ENCODE measurements at regions of chr5 and their contacts with region 1.

Region 1: DNA sequence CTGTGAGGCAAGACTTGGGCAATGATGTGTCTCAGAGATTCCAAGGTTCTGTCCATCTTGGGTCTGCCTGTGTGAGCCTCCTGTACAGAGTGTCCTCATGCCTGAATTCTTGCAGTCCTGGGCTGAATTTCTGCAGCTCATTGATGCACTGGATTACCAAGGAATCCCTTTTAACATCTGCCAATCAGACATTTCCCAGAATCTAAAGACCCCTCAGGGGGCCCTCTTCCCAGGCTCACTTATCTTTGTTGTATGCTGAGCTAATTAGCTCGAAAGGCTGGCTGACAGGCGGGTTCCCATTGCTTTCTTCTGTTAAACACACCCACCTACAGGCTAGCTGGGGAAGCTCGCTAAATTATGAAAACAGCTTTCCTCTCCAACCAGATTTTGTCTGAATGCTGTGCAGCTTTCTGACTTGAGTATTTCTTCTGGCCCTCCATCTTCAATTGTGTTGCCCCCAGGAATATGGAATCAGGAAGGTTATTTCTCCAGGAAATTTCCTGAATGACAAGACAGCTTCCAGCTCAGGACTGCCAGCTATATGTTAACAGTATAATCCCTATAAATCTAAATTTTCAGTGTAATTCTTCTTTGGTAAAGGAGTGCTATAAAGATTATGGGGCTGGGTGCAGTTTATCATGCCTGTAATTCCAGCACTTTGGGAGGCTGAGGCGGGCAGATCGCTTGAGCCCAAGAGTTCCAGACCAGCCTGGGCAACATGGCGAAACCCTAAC is at the start of gene LIX1:
- DNase-seq: peak in 2 of 5 donors; percentile 21 to 29
- ATAC-seq: peak; percentile 72 to 84 (median 76)
- H3K4me3 ChIP-seq: no peak within 1 kb of the TSS
- H3K27ac ChIP-seq: no peak within 1 kb of the TSS
- H3K4me1 ChIP-seq: no peaks in the 10 kb centered on the region
- H3K27me3 ChIP-seq: no peaks in the 10 kb centered on the region
- CTCF ChIP-seq: peak; percentile 30 to 69 (median 58)
- POLR2A ChIP-seq: no peak
- total RNA-seq, gene LIX1: 0.12 to 0.33 (median 0.22) TPM in 3 of 9 donors, not detected in the others

Region 2: DNA sequence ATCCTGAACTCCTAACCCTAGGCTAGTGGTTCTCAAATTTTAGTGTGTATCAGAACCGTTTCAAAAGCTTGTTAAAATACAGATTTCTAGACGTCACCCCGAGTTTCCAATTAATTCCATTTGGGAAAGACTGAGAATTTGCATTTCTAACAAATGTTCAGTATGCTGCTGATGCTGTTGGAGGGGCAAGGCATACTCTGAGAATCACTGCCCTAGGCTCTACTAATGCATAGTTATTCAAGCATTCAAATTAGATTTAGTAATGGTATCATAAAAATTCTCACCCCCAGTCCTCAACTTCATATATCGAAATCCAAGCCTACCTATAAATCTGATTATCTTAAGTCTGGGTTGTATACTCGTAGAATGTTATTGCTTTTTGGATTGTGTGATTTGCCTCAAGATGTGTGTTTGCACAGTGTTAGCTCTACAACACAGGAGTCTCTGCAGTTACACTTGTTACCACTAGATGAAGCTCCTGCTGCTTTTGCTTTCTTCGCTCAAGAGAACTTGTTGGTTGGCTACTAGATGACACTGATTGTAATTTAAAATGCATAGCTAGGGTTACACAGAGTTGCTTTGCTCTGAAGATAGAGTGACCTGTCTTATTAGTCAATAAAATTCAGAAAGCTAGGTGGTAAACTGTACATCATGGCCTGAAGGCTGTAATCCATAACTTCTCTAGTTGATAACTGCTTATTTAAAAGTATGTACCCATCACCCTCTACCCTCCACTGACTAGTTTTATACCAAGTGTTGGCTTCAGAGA is 273.9 kb before region 1 on chr5:
- intact Hi-C with region 1: loop called in 4 of 10 experiments (anchors 5 kb)
- DNase-seq: no peak
- ATAC-seq: peak; percentile 58 to 90 (median 82)
- H3K4me3 ChIP-seq: no peak overlapping the region
- H3K27ac ChIP-seq: no peak overlapping the region
- H3K4me1 ChIP-seq: no peaks in the 10 kb centered on the region
- H3K27me3 ChIP-seq: no peaks in the 10 kb centered on the region
- CTCF ChIP-seq: peak; percentile 82 to 94 (median 90)
- POLR2A ChIP-seq: no peak

Region 3: GRCh38 chr5:96997265-96997859 is 145.3 kb before region 1 on chr5:
- intact Hi-C with region 1: loop called in 3 of 10 experiments (anchors 5 kb)
- DNase-seq: no peak
- ATAC-seq: peak in 1 of 4 donors; percentile 61
- H3K4me3 ChIP-seq: no peak overlapping the region
- H3K27ac ChIP-seq: no peak overlapping the region
- H3K4me1 ChIP-seq: no peaks in the 10 kb centered on the region
- H3K27me3 ChIP-seq: no peaks in the 10 kb centered on the region
- CTCF ChIP-seq: peak in 11 of 12 donors; percentile 27 to 66 (median 49)
- POLR2A ChIP-seq: no peak

Region 4: DNA sequence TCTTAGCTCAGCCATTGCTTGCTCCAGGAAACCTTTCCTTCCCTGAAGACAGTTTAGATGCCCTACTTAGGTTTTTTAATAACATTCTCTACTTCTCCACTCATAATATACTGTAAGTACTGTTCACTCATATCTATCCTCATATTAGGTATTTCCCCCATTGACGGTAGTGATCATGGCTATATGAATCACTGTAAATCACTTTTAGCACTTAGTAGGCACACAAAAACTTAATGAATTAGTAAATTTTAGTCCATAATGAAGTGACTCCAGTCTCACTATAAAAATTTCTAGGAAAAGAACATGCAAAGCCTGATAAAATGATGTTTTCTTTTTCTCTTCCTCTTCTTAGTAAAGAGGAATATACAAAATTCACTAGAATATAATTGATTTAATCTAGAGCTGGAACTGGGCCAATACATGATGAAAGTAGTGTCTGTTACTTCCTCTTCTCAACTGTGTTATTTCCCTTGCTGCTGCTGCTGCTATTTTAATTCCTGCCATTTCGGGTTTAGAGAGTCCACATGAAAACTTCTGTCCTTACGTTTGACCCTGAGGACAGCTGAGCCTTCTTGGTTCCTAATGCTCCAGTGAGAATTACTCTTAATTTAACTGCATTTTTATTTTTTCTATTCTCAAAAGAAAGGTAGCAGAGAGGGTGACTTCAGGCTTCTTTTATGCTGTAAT is 133.3 kb before region 1 on chr5:
- intact Hi-C with region 1: loop called in 1 of 10 experiments (anchors 5 kb)
- DNase-seq: peak in 1 of 5 donors; percentile 13
- ATAC-seq: peak in 3 of 4 donors; percentile 57 to 60 (median 59)
- H3K4me3 ChIP-seq: no peak overlapping the region
- H3K27ac ChIP-seq: peak overlapping the region in 2 of 12 donors; percentile 25 to 63
- H3K4me1 ChIP-seq: peaks cover 0 to 19% (median 10%) of the 10 kb centered on the region in 12 donors
- H3K27me3 ChIP-seq: no peaks in the 10 kb centered on the region
- CTCF ChIP-seq: no peak
- POLR2A ChIP-seq: no peak

Region 5: DNA sequence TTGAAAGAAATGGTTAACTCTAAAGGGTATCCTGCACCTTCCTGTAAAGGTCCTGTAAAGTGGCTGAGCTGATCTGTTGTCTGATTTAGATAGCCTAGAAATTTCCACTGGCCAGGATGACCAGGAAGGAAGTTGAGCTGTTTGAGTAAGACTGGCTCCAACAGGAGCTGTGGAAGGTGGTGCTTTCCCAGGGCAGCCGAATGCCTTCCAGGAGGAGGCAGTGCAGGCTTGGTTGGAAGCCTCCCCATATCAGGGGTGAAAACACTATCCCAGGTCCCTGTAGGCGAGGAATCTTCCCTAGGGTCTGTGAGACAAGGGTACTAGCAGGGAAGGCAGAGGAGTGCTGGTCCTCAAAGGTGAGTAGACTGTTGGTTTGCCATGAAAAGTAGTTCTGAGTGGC is 98.6 kb before region 1 on chr5:
- intact Hi-C with region 1: loop called (anchors 1 to 10 kb)
- DNase-seq: peak in 4 of 5 donors; percentile 15 to 42 (median 26)
- ATAC-seq: peak; percentile 66 to 88 (median 84)
- H3K4me3 ChIP-seq: no peak overlapping the region
- H3K27ac ChIP-seq: no peak overlapping the region
- H3K4me1 ChIP-seq: peaks cover 0 to 6% (median 0%) of the 10 kb centered on the region in 12 donors
- H3K27me3 ChIP-seq: no peaks in the 10 kb centered on the region
- CTCF ChIP-seq: peak; percentile 28 to 62 (median 48)
- POLR2A ChIP-seq: no peak

Region 6: DNA sequence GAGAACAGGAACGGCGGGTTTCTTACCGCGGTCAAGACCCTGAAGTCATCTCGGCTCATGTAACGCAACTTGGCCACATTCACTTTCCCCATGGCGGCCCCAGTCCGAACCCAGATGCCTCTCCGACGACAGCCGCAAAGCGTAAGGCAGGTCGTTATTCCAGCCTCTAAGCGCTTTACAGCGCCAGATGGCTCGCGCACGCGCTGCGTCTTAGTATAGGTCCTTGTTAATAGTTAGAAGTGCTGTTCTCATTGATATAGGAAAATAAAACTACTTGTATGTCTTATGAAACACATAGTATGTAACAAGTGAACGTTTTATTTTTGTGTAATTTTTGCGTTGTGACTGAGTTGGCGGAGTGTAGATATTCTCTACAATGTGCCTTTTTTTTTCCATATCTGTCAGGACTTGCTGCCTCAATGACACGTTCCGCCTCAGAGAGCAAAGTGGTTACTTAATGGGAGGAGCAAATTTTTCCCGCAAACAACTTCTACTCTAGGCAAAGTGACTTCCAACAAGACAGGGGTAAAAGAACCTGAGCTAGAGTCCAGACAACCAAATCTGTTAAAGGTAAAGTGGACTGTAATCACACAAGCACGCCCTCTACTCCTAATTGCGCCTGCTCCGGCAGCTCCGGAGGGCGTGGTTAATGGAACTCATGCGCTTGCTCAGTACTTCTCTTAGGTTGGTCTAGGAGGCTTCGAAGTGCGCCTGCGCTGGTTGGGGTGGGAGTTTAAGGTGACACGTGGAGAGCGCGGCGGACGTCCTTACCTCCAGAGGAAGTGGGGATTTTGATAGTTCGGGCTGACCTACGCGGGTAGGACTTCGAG is 40.6 kb after region 1 on chr5 and contains the start of gene RIOK2:
- intact Hi-C with region 1: no loop called
- DNase-seq: peak; percentile 93 to 96 (median 96)
- ATAC-seq: peak; percentile 96 to 98 (median 97)
- H3K4me3 ChIP-seq: peak within 1 kb of the TSS; percentile 48 to 97 (median 78)
- H3K27ac ChIP-seq: peak within 1 kb of the TSS; percentile 88 to 94 (median 91)
- H3K4me1 ChIP-seq: peaks cover 0 to 32% (median 20%) of the 10 kb centered on the region in 12 donors
- H3K27me3 ChIP-seq: no peaks in the 10 kb centered on the region
- CTCF ChIP-seq: no peak
- POLR2A ChIP-seq: peak in 1 of 2 donors; percentile 56
- total RNA-seq, gene RIOK2: 8.2 to 23.6 (median 16.9) TPM